ENCODE measurements at regions of chr15 and their contacts with region 1.

Region 1: GRCh38 chr15:73142802-73143762 is 90.8 kb downstream of the NEO1 start:
- DNase-seq: no peak
- H3K4me3 ChIP-seq: no peak overlapping the region
- H3K27ac ChIP-seq: no peak overlapping the region
- H3K4me1 ChIP-seq: no peaks in the 10 kb centered on the region
- H3K27me3 ChIP-seq: no peaks in the 10 kb centered on the region
- CTCF ChIP-seq: no peak

Region 2: GRCh38 chr15:73200339-73200738 is 57.3 kb after region 1 on chr15:
- intact Hi-C with region 1: loop called (anchors 10 kb)
- DNase-seq: no peak
- H3K4me3 ChIP-seq: no peak overlapping the region
- H3K27ac ChIP-seq: no peak overlapping the region
- H3K4me1 ChIP-seq: peaks cover 5% of the 10 kb centered on the region
- H3K27me3 ChIP-seq: no peaks in the 10 kb centered on the region
- CTCF ChIP-seq: no peak

Measured in left ventricle myocardium inferior (tissue), 1 donor.